PC-3 (cell line): ENCODE measurements at regions of chr6 and their contacts with region 1.

Region 1: GRCh38 chr6:8102122-8102958 is at the start of gene EEF1E1:
- DNase-seq: peak; percentile 94
- ATAC-seq: peak; percentile 93
- H3K4me3 ChIP-seq: peak within 1 kb of the TSS; percentile 81
- H3K27ac ChIP-seq: peak within 1 kb of the TSS; percentile 39
- H3K4me1 ChIP-seq: peaks cover 9% of the 10 kb centered on the region
- H3K27me3 ChIP-seq: no peaks in the 10 kb centered on the region
- CTCF ChIP-seq: no peak
- total RNA-seq, gene EEF1E1: 64.6 and 72.6 TPM in 2 replicates

Region 2: GRCh38 chr6:7899101-7899888 is 203.0 kb before region 1 on chr6:
- CTCF ChIA-PET with region 1: no interaction called
- POLR2A ChIA-PET with region 1: interaction called, 20 read pairs
- intact Hi-C with region 1: no loop called
- DNase-seq: peak; percentile 24
- ATAC-seq: 0 out of 2 replicates have a peak, but pooled peaks have one; percentile 52
- H3K4me3 ChIP-seq: no peak overlapping the region
- H3K27ac ChIP-seq: no peak overlapping the region
- H3K4me1 ChIP-seq: no peaks in the 10 kb centered on the region; the same call in 1 of the 2 replicates
- H3K27me3 ChIP-seq: no peaks in the 10 kb centered on the region
- CTCF ChIP-seq: peak; percentile 49; the same call in 1 of the 2 replicates

Region 3: GRCh38 chr6:7939184-7939863 is 163.0 kb before region 1 on chr6:
- CTCF ChIA-PET with region 1: no interaction called
- POLR2A ChIA-PET with region 1: no interaction called
- intact Hi-C with region 1: no loop called
- DNase-seq: no peak
- ATAC-seq: no peak
- H3K4me3 ChIP-seq: no peak overlapping the region
- H3K27ac ChIP-seq: no peak overlapping the region
- H3K4me1 ChIP-seq: no peaks in the 10 kb centered on the region
- H3K27me3 ChIP-seq: no peaks in the 10 kb centered on the region
- CTCF ChIP-seq: no peak

Region 4: GRCh38 chr6:8195714-8196104 is 93.4 kb after region 1 on chr6:
- CTCF ChIA-PET with region 1: no interaction called
- POLR2A ChIA-PET with region 1: no interaction called
- intact Hi-C with region 1: no loop called
- DNase-seq: no peak
- ATAC-seq: no peak
- H3K4me3 ChIP-seq: no peak overlapping the region
- H3K27ac ChIP-seq: no peak overlapping the region
- H3K4me1 ChIP-seq: no peaks in the 10 kb centered on the region
- H3K27me3 ChIP-seq: peaks cover 52% of the 10 kb centered on the region
- CTCF ChIP-seq: no peak